Posterior vena cava (tissue), 2 donors: ENCODE measurements at regions of chr5 and their contacts with region 1.

Region 1: GRCh38 chr5:119267958-119268386 is 87.8 kb upstream of the TNFAIP8 start:
- DNase-seq: peak; percentile 97

Region 2: DNA sequence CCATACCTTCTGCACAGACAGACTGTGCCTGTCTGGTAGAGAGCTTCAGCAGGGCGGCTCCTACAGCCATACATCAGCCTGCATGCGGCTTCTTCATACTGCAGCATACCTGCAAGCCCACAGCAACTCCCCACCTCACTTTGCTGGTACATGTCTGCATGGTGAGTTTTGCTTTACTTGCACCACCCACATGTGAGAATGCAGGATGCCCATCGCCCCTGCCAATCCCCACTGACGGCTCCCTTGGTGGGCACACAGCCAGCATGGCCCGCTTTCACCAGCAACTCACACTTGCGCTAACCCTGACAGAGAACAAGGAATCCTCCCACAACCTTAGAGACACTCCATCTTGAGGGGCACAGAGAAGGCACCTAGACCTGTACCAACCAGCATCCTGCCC is 394.6 kb before region 1 on chr5:
- intact Hi-C with region 1: no loop called
- DNase-seq: no peak

Region 3: GRCh38 chr5:119238265-119239118 is 29.5 kb before region 1 on chr5:
- intact Hi-C with region 1: loop called in 1 of 2 experiments (anchors 1 kb)
- DNase-seq: no peak

Region 4: GRCh38 chr5:119243898-119244297 is 24.1 kb before region 1 on chr5:
- intact Hi-C with region 1: loop called in 1 of 2 experiments (anchors 2 kb)
- DNase-seq: no peak

Region 5: GRCh38 chr5:119322948-119323537 is 55.1 kb after region 1 on chr5:
- intact Hi-C with region 1: loop called in 1 of 2 experiments (anchors 5 kb)
- DNase-seq: no peak

Region 6: GRCh38 chr5:119411935-119412602 is 144.1 kb after region 1 on chr5:
- intact Hi-C with region 1: loop called in 1 of 2 experiments (anchors 5 kb)
- DNase-seq: no peak